Uterus (tissue), 4 donors: ENCODE measurements at regions of chr12 and their contacts with region 1.

Region 1: DNA sequence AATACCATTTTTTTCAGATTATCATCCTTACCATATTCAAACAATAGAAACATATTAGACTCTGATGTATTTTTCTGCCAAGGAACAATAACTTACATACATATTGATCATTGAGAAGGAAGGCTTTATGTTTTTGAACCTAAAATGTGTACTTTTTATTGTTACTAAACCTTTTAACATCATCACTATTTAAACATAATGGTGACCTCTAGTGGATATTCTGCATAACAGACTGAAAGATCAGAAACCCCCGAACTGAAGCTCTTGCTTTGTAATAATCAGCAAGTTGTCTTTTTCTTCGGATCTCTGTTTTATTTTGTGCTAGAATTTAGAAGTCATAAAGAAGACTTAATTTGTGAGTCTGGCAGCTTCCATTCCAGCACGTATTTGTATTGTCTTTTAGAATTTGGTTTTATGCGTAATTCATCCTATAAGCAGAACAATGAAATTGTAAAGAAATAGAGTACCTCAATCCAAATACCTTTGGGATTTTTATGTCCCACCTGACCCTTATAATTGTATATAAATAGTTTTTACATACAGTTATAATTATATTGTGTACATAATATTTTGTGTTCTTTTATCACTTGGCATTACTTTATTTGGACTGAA is 125.9 kb upstream of the ATF1 start:
- DNase-seq: no peak
- H3K4me3 ChIP-seq: no peak overlapping the region
- H3K27ac ChIP-seq: peak overlapping the region; percentile 13 to 26
- H3K4me1 ChIP-seq: no peaks in the 10 kb centered on the region
- H3K27me3 ChIP-seq: no peaks in the 10 kb centered on the region
- CTCF ChIP-seq: peak; percentile 55 to 78 (median 63)
- POLR2A ChIP-seq: no peak

Region 2: GRCh38 chr12:50504798-50505385 is 133.1 kb before region 1 on chr12 and contains the start of gene DIP2B:
- intact Hi-C with region 1: loop called (anchors 2 kb)
- DNase-seq: peak; percentile 94 to 95
- H3K4me3 ChIP-seq: peak within 1 kb of the TSS; percentile 76 to 79
- H3K27ac ChIP-seq: peak within 1 kb of the TSS; percentile 94 to 95
- H3K4me1 ChIP-seq: peaks cover 0 to 7% of the 10 kb centered on the region in 2 donors
- H3K27me3 ChIP-seq: no peaks in the 10 kb centered on the region
- CTCF ChIP-seq: peak; percentile 91 to 98 (median 98)
- POLR2A ChIP-seq: peak; percentile 64 to 88
- total RNA-seq, gene DIP2B: 5.6 to 47.0 (median 14.9) TPM